ENCODE measurements at regions of chr5 and their contacts with region 1.

Region 1: DNA sequence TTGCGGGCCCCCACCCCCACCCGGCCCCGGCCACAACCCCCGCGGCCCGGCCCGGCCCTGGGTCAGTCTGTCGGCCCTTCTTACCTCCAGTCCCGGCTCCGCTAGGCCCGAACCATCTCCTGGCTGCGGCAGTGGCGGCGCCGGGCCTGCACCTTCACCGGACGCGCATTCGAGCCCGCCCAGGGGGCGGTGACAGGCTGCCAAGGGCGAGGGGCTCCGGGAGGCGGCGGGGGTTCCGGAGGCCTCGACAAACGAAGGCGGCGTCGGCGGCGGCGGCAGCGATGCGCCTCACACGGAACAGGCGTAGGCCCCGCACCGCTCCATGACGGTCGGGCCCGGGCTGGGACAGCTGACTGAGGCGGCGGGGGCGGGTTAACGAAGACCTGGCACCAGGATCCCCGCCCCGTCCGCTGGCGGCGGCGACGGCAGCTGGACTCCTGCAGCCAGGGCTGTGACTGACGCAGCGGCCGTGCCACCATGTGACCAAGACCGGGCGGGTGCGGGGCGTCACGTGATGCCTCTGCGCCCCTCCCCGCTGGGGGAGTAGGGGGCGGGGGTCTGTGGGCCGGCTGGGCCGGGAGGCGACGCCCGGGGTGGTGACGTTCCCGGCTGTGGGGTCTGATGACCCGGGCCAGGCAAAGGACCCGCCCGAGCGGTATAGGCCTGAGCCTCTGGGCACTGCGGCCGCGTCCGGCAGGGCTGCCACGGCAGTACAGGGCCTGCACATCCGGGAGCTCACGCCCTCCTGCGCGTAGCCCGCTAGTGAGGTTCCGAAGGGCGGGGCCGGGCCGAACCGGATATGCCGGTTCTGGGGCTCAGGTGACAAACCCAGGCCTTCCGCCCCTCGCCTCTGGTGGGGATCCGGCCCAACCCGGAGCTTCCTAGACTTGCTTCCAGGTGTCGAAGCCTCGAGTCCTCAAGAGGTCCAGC is at the start of gene AFF4:
- DNase-seq: peak; percentile 99
- ATAC-seq: peak; percentile 97
- total RNA-seq, gene AFF4: 26.8 TPM

Region 2: GRCh38 chr5:133051580-133052332 is 88.3 kb after region 1 on chr5 and contains the start of gene HSPA4:
- intact Hi-C with region 1: loop called (anchors 5 kb)
- DNase-seq: peak; percentile 98
- ATAC-seq: peak; percentile 95
- total RNA-seq, gene HSPA4: 68.8 TPM